ENCODE measurements at regions of chr15 and their contacts with region 1.

Region 1: GRCh38 chr15:40421246-40422157 is 15.9 kb downstream of the IVD start:
- DNase-seq: peak; percentile 91
- H3K4me3 ChIP-seq: peak overlapping the region in 1 of 2 experiments; percentile 39; a peak in 1 of 4 replicates
- H3K27ac ChIP-seq: no peak overlapping the region
- H3K4me1 ChIP-seq: peaks cover 0 to 20% of the 10 kb centered on the region in 2 experiments; a peak in 1 of 4 replicates
- H3K27me3 ChIP-seq: no peaks in the 10 kb centered on the region
- CTCF ChIP-seq: peak; percentile 92
- EP300 ChIP-seq: no peak
- RAD21 ChIP-seq: peak; percentile 93

Region 2: GRCh38 chr15:39642011-39642640 is 779.4 kb before region 1 on chr15:
- CTCF ChIA-PET with region 1: no interaction called
- POLR2A ChIA-PET with region 1: no interaction called
- DNase-seq: peak; percentile 42
- H3K4me3 ChIP-seq: no peak overlapping the region
- H3K27ac ChIP-seq: peak overlapping the region; percentile 77 to 92; a peak in 3 of 4 replicates
- H3K4me1 ChIP-seq: peaks cover 9 to 27% of the 10 kb centered on the region in 2 experiments
- H3K27me3 ChIP-seq: no peaks in the 10 kb centered on the region
- CTCF ChIP-seq: no peak
- EP300 ChIP-seq: peak; percentile 23 to 76; a peak in 2 of 4 replicates
- RAD21 ChIP-seq: no peak

Region 3: GRCh38 chr15:40274350-40275274 is 146.9 kb before region 1 on chr15:
- CTCF ChIA-PET with region 1: interaction called, 20 read pairs
- POLR2A ChIA-PET with region 1: no interaction called
- DNase-seq: peak; percentile 88
- H3K4me3 ChIP-seq: peak overlapping the region in 1 of 2 experiments; percentile 30; a peak in 1 of 4 replicates
- H3K27ac ChIP-seq: no peak overlapping the region
- H3K4me1 ChIP-seq: peaks cover under 1 to 5% of the 10 kb centered on the region in 2 experiments; a peak in 1 of 4 replicates
- H3K27me3 ChIP-seq: no peaks in the 10 kb centered on the region
- CTCF ChIP-seq: peak; percentile 100
- EP300 ChIP-seq: no peak
- RAD21 ChIP-seq: peak; percentile 93

Region 4: GRCh38 chr15:40323239-40323952 is 98.1 kb before region 1 on chr15 and contains the start of gene INAFM2:
- CTCF ChIA-PET with region 1: interaction called, 75 read pairs
- POLR2A ChIA-PET with region 1: no interaction called
- DNase-seq: peak; percentile 98
- H3K4me3 ChIP-seq: peak within 1 kb of the TSS; percentile 70 to 73
- H3K27ac ChIP-seq: peak within 1 kb of the TSS in 1 of 2 experiments; percentile 43; a peak in 1 of 4 replicates
- H3K4me1 ChIP-seq: peaks cover 20 to 23% of the 10 kb centered on the region in 2 experiments; a peak in 3 of 4 replicates
- H3K27me3 ChIP-seq: no peaks in the 10 kb centered on the region
- CTCF ChIP-seq: peak; percentile 60
- EP300 ChIP-seq: no peak
- RAD21 ChIP-seq: peak; percentile 20
- polyA plus RNA-seq, gene INAFM2: 7.8 and 9.8 TPM in 2 replicates

Region 5: GRCh38 chr15:40357723-40358470 is 63.6 kb before region 1 on chr15 and contains the start of gene DISP2:
- CTCF ChIA-PET with region 1: interaction called, 12 read pairs
- POLR2A ChIA-PET with region 1: no interaction called
- DNase-seq: peak; percentile 100
- H3K4me3 ChIP-seq: peak within 1 kb of the TSS; percentile 59
- H3K27ac ChIP-seq: peak within 1 kb of the TSS in 1 of 2 experiments; percentile 92; a peak in 2 of 4 replicates
- H3K4me1 ChIP-seq: peaks cover 0 to 36% of the 10 kb centered on the region in 2 experiments; a peak in 2 of 4 replicates
- H3K27me3 ChIP-seq: 0 out of 2 replicates have a peak, but pooled peaks cover 11% of the 10 kb centered on the region
- CTCF ChIP-seq: no peak
- EP300 ChIP-seq: no peak; a peak in 1 of 4 replicates
- RAD21 ChIP-seq: no peak
- polyA plus RNA-seq, gene DISP2: 0.08 and 0.12 TPM in 2 replicates

Region 6: DNA sequence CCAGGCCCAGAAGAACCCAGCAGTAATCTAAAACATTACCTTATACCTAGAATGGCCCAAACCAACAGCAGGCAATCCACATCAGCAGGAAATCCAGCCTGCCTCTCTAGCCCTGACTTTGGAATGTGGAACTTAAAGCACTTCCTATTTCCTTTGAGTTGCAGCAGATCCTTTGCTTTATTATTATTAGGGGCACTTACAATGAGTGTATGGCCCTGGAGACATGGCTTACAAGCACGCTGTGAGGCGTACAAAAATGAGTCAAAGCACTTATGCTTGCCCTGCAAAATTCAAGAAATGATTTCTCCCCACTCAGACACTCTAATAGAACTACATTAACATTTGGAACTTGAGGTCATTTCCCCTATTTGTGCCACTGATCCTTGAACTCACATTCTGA is 48.5 kb before region 1 on chr15:
- CTCF ChIA-PET with region 1: interaction called, 12 read pairs
- POLR2A ChIA-PET with region 1: interaction called, 3 read pairs
- DNase-seq: no peak
- H3K4me3 ChIP-seq: no peak overlapping the region
- H3K27ac ChIP-seq: no peak overlapping the region
- H3K4me1 ChIP-seq: no peaks in the 10 kb centered on the region
- H3K27me3 ChIP-seq: no peaks in the 10 kb centered on the region
- CTCF ChIP-seq: no peak
- EP300 ChIP-seq: no peak
- RAD21 ChIP-seq: no peak

Region 7: GRCh38 chr15:40388946-40389841 is 32.3 kb before region 1 on chr15:
- CTCF ChIA-PET with region 1: interaction called, 18 read pairs
- POLR2A ChIA-PET with region 1: no interaction called
- DNase-seq: no peak
- H3K4me3 ChIP-seq: no peak overlapping the region
- H3K27ac ChIP-seq: no peak overlapping the region
- H3K4me1 ChIP-seq: peaks cover 3 to 6% of the 10 kb centered on the region in 2 experiments; a peak in 1 of 4 replicates
- H3K27me3 ChIP-seq: no peaks in the 10 kb centered on the region
- CTCF ChIP-seq: no peak
- EP300 ChIP-seq: no peak
- RAD21 ChIP-seq: no peak

Region 8: DNA sequence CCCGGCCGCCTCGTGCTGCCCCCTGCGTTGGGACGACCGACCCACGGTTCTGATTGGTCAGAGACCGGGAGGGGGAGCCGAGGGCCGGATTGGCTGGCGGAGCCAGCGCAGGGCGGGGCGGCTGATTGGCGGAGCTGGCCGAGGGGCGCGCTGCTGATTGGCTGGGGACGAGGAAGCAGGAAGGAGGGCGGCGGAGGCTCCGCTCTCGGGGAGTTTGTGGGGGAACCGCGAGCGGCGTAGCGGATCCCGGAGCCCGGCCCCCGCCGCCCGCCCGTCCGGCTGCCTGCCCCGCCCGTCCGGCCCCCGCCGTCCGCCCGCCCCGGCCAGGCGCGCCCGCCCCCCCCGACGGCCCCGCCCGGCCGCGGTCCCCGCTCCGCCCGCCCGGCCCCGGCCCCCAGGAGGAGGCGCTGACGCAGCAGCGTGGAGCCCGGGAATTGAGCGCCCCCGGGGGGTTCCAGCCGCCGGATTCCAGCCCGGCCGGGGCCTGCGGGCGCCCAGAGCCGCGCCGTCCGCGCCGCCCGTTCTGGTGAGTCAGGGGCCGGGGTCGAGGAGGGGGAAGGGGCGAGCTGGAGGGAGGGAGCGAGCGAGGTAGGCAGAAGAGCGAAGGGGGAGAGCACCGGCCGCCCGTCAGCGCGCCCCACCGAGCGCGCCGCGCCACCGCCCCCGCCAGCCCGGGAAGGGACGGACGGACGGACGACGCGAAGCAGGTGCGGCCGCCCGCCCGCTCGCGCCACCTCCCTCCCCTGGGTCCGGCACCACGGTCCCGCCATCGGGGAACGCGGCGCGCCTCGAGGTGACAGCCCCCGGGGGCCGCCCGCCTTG is 19.5 kb after region 1 on chr15 and contains the start of gene BAHD1:
- CTCF ChIA-PET with region 1: interaction called, 16 read pairs
- POLR2A ChIA-PET with region 1: no interaction called
- DNase-seq: peak; percentile 100
- H3K4me3 ChIP-seq: peak within 1 kb of the TSS; percentile 75 to 77
- H3K27ac ChIP-seq: peak within 1 kb of the TSS in 1 of 2 experiments; percentile 72; a peak in 2 of 4 replicates
- H3K4me1 ChIP-seq: peaks cover 12 to 38% of the 10 kb centered on the region in 2 experiments; a peak in 3 of 4 replicates
- H3K27me3 ChIP-seq: no peaks in the 10 kb centered on the region; the same call in 1 of the 2 replicates
- CTCF ChIP-seq: peak; percentile 17; the same call in 1 of the 2 replicates
- EP300 ChIP-seq: no peak
- RAD21 ChIP-seq: no peak
- polyA plus RNA-seq, gene BAHD1: 4.7 and 5.5 TPM in 2 replicates

Measured in SK-N-SH (cell line).